ENCODE measurements at regions of chr3 and their contacts with region 1.

Region 1: GRCh38 chr3:11835028-11835639 is 11.6 kb downstream of the TAMM41 start:
- DNase-seq: no peak
- H3K4me3 ChIP-seq: no peak overlapping the region
- H3K27ac ChIP-seq: no peak overlapping the region
- H3K27me3 ChIP-seq: no peaks in the 10 kb centered on the region
- CTCF ChIP-seq: peak; percentile 33 to 74 (median 60)

Region 2: DNA sequence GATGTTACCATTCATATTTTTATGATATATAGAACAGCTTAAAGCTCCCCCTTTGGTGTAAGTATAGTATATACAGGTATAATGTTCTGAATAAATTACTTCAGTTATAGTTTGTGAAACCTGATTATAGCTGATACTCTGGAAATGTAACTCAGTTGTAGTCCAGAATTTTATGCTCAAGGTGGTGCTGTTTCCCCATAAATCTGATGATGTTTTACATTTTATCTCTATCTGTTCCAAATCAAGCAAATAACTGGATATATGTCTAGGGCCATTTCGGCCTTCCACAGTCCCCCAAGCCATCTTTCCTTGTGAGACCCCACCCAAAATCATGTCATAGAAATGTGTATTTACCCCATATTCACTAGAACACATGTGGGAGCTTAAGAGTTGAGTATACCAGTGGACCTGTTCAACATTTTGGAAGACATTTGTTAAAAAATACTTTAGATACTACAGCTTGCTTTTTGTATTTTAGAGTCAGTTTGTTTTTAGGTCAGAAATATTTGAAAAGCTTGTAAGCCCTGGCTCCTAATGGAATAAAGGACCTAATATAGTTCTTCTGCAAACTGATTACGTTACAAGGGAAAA is 455.8 kb before region 1 on chr3:
- intact Hi-C with region 1: loop called in 1 of 2 experiments (anchors 5 kb)
- DNase-seq: no peak
- H3K4me3 ChIP-seq: peak overlapping the region in 46 of 59 donors; percentile 1 to 57 (median 27)
- H3K27ac ChIP-seq: peak overlapping the region in 48 of 59 donors; percentile 7 to 79 (median 60)
- H3K27me3 ChIP-seq: no peaks in the 10 kb centered on the region
- CTCF ChIP-seq: peak; percentile 38 to 89 (median 78)

Region 3: GRCh38 chr3:11774294-11774877 is 60.7 kb before region 1 on chr3:
- intact Hi-C with region 1: loop called in 1 of 2 experiments (anchors 2 kb)
- DNase-seq: peak in 7 of 10 donors; percentile 9 to 51 (median 39)
- H3K4me3 ChIP-seq: no peak overlapping the region
- H3K27ac ChIP-seq: no peak overlapping the region
- H3K27me3 ChIP-seq: no peaks in the 10 kb centered on the region
- CTCF ChIP-seq: peak in 52 of 56 donors; percentile 20 to 63 (median 44)

Region 4: GRCh38 chr3:12187448-12188327 is 352.6 kb after region 1 on chr3:
- intact Hi-C with region 1: no loop called
- DNase-seq: peak in 2 of 10 donors; percentile 31 to 43
- H3K4me3 ChIP-seq: no peak overlapping the region
- H3K27ac ChIP-seq: peak overlapping the region in 39 of 59 donors; percentile 4 to 71 (median 49)
- H3K27me3 ChIP-seq: no peaks in the 10 kb centered on the region
- CTCF ChIP-seq: no peak